Ovary (tissue), 10 donors: ENCODE measurements at regions of chr4 and their contacts with region 1.

Region 1: DNA sequence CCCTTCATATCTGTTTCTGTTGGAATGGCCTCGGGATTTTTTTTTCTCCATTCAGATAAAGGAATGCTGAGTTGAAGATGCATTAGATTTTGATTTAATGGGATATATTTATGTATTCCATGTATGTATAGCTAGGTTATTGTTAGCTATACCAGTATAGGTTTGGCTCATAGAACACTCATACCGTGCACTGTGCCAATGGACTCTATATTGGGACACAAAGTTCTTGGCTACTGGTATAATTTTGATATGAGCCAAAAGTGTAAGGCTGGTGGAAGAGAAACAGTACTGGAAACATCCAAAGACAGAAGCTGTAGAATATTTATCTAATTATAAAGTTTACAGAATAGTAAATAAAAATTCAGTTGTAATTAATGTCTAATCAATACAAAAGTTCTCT is 1912.1 kb downstream of the STIM2 start:
- DNase-seq: no peak
- H3K4me3 ChIP-seq: no peak overlapping the region
- H3K27ac ChIP-seq: no peak overlapping the region
- H3K4me1 ChIP-seq: no peaks in the 10 kb centered on the region
- H3K27me3 ChIP-seq: peaks cover 2% of the 10 kb centered on the region
- CTCF ChIP-seq: no peak
- EP300 ChIP-seq: no peak
- POLR2A ChIP-seq: no peak

Region 2: DNA sequence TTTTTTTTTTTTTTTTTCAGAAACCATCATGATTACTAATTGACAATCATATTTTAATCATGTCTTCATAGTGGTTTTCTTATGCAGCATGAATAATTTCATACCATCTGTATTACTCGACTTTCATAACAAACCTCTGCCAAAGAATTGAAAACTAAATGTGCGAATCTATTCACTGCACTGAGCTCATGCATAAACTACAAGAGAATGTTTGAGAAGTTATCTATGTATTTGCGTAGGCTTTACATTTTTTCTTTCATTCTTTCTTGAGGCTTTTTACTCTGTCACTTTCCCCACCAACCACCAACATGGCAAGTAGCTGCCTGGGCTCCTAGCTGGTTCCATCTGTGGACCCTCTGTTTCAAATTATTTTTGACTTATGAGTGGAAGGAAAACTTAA is 151.2 kb before region 1 on chr4:
- intact Hi-C with region 1: no loop called
- DNase-seq: no peak
- H3K4me3 ChIP-seq: no peak overlapping the region
- H3K27ac ChIP-seq: no peak overlapping the region
- H3K4me1 ChIP-seq: no peaks in the 10 kb centered on the region
- H3K27me3 ChIP-seq: no peaks in the 10 kb centered on the region
- CTCF ChIP-seq: no peak
- EP300 ChIP-seq: no peak
- POLR2A ChIP-seq: no peak

Region 3: GRCh38 chr4:28784188-28784587 is 11.4 kb after region 1 on chr4:
- intact Hi-C with region 1: loop called in 1 of 4 experiments (anchors 1 kb)
- DNase-seq: no peak
- H3K4me3 ChIP-seq: no peak overlapping the region
- H3K27ac ChIP-seq: no peak overlapping the region
- H3K4me1 ChIP-seq: no peaks in the 10 kb centered on the region
- H3K27me3 ChIP-seq: no peaks in the 10 kb centered on the region
- CTCF ChIP-seq: no peak
- EP300 ChIP-seq: no peak
- POLR2A ChIP-seq: no peak